Right lobe of liver (tissue), 6 donors: ENCODE measurements at regions of chr2 and their contacts with region 1.

Region 1: GRCh38 chr2:174004905-174005605 is 39.9 kb upstream of the SP3 start:
- DNase-seq: no peak
- ATAC-seq: peak in 1 of 4 donors; percentile 7
- H3K4me3 ChIP-seq: no peak overlapping the region
- H3K27ac ChIP-seq: peak overlapping the region in 1 of 3 donors; percentile 14
- H3K4me1 ChIP-seq: peaks cover 0 to 7% (median 0%) of the 10 kb centered on the region in 4 donors
- H3K27me3 ChIP-seq: no peaks in the 10 kb centered on the region
- CTCF ChIP-seq: no peak
- POLR2A ChIP-seq: no peak

Region 2: DNA sequence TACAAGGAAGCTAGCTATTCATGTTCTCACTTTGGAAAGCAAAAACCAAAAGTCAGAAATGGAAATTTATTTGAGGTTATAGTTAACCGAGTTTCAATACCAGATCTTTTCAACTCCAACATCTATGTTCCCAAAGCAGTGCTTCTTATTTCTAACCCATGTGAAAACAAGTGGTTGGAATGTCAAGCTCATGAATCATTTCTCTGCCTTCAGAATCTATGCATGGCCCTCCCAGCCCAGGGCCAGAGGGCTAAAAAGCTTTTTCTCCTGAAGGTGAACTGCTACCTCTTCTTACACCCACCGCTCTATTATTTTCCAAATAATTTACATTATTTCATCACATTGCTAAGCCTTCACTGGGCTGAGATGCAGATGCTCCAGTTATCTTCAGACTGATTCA is 198.3 kb before region 1 on chr2:
- intact Hi-C with region 1: no loop called
- DNase-seq: no peak
- ATAC-seq: no peak
- H3K4me3 ChIP-seq: no peak overlapping the region
- H3K27ac ChIP-seq: no peak overlapping the region
- H3K4me1 ChIP-seq: no peaks in the 10 kb centered on the region
- H3K27me3 ChIP-seq: no peaks in the 10 kb centered on the region
- CTCF ChIP-seq: no peak
- POLR2A ChIP-seq: no peak

Region 3: DNA sequence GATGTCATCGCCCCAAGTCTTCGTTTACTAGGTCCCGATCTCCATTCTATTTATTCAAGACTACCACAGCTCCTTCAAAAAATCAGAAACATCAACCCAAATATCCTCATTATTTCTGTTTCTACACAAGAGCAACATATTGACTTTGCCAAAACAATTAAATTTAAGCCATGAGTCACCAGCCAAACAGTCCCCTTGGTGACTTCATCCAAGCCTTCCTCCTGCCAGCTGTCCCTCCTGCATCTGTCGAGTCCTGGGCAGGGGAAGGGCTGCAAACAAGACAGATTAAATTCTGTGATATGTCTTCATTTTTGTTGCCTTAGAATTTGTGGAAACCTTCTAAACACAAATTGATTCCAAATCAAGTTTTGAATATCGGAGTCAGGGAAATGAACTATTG is 150.2 kb before region 1 on chr2:
- intact Hi-C with region 1: loop called in 1 of 2 experiments (anchors 5 kb)
- DNase-seq: peak in 1 of 3 donors; percentile 52
- ATAC-seq: peak in 2 of 4 donors; percentile 46 to 83
- H3K4me3 ChIP-seq: no peak overlapping the region
- H3K27ac ChIP-seq: no peak overlapping the region
- H3K4me1 ChIP-seq: peaks cover 0 to 10% (median 0%) of the 10 kb centered on the region in 4 donors
- H3K27me3 ChIP-seq: no peaks in the 10 kb centered on the region
- CTCF ChIP-seq: no peak
- POLR2A ChIP-seq: no peak

Region 4: GRCh38 chr2:173884025-173884802 is 120.8 kb before region 1 on chr2:
- intact Hi-C with region 1: loop called in 1 of 2 experiments (anchors 10 kb)
- DNase-seq: peak; percentile 65 to 72 (median 69)
- ATAC-seq: peak; percentile 86 to 93 (median 88)
- H3K4me3 ChIP-seq: no peak overlapping the region
- H3K27ac ChIP-seq: no peak overlapping the region
- H3K4me1 ChIP-seq: no peaks in the 10 kb centered on the region
- H3K27me3 ChIP-seq: no peaks in the 10 kb centered on the region
- CTCF ChIP-seq: peak; percentile 67 to 84 (median 75)
- POLR2A ChIP-seq: no peak